A549 (cell line): ENCODE measurements at regions of chr11 and their contacts with region 1.

Region 1: GRCh38 chr11:18731949-18732821 is 6.2 kb upstream of the IGSF22 start:
- DNase-seq: peak; percentile 43 to 84
- ATAC-seq: peak; percentile 65 to 84; a peak in 5 of 6 replicates
- H3K4me3 ChIP-seq: no peak overlapping the region
- H3K27ac ChIP-seq: no peak overlapping the region
- H3K4me1 ChIP-seq: no peaks in the 10 kb centered on the region
- CTCF ChIP-seq: peak; percentile 86
- EP300 ChIP-seq: no peak
- POLR2A ChIP-seq: no peak
- RAD21 ChIP-seq: peak; percentile 70 to 75

Region 2: DNA sequence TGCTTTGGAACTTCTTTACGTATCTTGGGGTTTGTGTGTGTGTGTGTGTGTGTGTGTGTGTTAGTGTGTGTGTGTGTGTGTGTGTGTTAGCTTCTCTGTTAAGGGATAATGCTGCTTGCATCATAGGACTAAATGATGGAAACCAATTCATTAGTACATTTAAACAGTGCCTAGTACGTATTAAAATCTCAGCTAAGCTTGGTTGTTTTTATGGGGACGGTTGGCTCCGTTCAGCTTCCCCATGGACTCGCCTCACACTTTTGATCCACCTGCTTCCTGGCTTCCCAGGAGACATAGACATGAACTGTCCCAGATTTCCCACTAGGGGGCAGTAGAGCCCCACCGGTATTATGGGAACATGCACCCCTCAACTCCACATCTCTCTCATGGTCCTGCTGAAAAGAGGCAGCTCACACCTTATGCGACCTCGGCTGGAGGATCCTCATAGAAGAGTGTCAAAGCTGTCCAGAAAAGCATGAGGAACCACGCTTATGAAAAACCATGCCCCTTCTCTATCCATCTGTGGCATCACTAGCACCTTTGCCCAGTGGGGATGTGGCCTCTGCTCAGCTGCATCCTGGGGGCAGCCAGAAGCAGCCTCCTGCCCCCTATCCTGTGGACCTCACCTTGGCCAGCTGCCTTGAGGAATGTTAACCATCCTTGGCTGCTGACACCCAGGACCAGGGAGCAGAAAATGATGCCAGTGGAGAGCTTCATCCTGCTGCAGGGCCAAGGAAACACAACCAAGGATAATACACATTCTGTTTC is 616.6 kb before region 1 on chr11:
- CTCF ChIA-PET with region 1: interaction called, 13 read pairs
- POLR2A ChIA-PET with region 1: no interaction called
- DNase-seq: peak; percentile 72 to 75
- ATAC-seq: peak; percentile 91 to 97
- H3K4me3 ChIP-seq: no peak overlapping the region
- H3K27ac ChIP-seq: no peak overlapping the region
- H3K4me1 ChIP-seq: no peaks in the 10 kb centered on the region
- CTCF ChIP-seq: peak; percentile 89
- EP300 ChIP-seq: no peak
- POLR2A ChIP-seq: no peak
- RAD21 ChIP-seq: peak; percentile 83 to 88

Region 3: GRCh38 chr11:18713646-18714442 is 18.3 kb before region 1 on chr11:
- CTCF ChIA-PET with region 1: interaction called, 17 read pairs
- POLR2A ChIA-PET with region 1: no interaction called
- DNase-seq: no peak
- ATAC-seq: no peak
- H3K4me3 ChIP-seq: no peak overlapping the region
- H3K27ac ChIP-seq: no peak overlapping the region
- H3K4me1 ChIP-seq: no peaks in the 10 kb centered on the region
- CTCF ChIP-seq: no peak
- EP300 ChIP-seq: no peak
- POLR2A ChIP-seq: no peak
- RAD21 ChIP-seq: no peak

Region 4: GRCh38 chr11:18749697-18750319 is 17.6 kb after region 1 on chr11:
- CTCF ChIA-PET with region 1: interaction called, 112 read pairs
- POLR2A ChIA-PET with region 1: no interaction called
- DNase-seq: peak; percentile 37 to 53
- ATAC-seq: peak; percentile 75 to 88
- H3K4me3 ChIP-seq: no peak overlapping the region
- H3K27ac ChIP-seq: peak overlapping the region; percentile 59 to 81
- H3K4me1 ChIP-seq: peaks cover 15% of the 10 kb centered on the region; the same call in 2 of the 3 replicates
- CTCF ChIP-seq: no peak
- EP300 ChIP-seq: no peak
- POLR2A ChIP-seq: no peak
- RAD21 ChIP-seq: no peak

Region 5: GRCh38 chr11:18768472-18768901 is 36.3 kb after region 1 on chr11:
- CTCF ChIA-PET with region 1: interaction called, 137 read pairs
- POLR2A ChIA-PET with region 1: no interaction called
- DNase-seq: no peak
- ATAC-seq: no peak
- H3K4me3 ChIP-seq: no peak overlapping the region
- H3K27ac ChIP-seq: no peak overlapping the region
- H3K4me1 ChIP-seq: peaks cover 11% of the 10 kb centered on the region
- CTCF ChIP-seq: no peak
- EP300 ChIP-seq: no peak
- POLR2A ChIP-seq: no peak
- RAD21 ChIP-seq: no peak

Region 6: GRCh38 chr11:19326499-19326898 is 594.3 kb after region 1 on chr11:
- CTCF ChIA-PET with region 1: no interaction called
- POLR2A ChIA-PET with region 1: no interaction called
- DNase-seq: peak in 1 of 2 experiments; percentile 17
- ATAC-seq: peak in 1 of 2 experiments; percentile 59; a peak in 3 of 6 replicates
- H3K4me3 ChIP-seq: no peak overlapping the region
- H3K27ac ChIP-seq: no peak overlapping the region
- H3K4me1 ChIP-seq: no peaks in the 10 kb centered on the region
- CTCF ChIP-seq: peak; percentile 28; the same call in 2 of the 3 replicates
- EP300 ChIP-seq: no peak
- POLR2A ChIP-seq: no peak
- RAD21 ChIP-seq: peak; percentile 41 to 45